GM13976 (cell line): ENCODE measurements at regions of chr10 and their contacts with region 1.

Region 1: DNA sequence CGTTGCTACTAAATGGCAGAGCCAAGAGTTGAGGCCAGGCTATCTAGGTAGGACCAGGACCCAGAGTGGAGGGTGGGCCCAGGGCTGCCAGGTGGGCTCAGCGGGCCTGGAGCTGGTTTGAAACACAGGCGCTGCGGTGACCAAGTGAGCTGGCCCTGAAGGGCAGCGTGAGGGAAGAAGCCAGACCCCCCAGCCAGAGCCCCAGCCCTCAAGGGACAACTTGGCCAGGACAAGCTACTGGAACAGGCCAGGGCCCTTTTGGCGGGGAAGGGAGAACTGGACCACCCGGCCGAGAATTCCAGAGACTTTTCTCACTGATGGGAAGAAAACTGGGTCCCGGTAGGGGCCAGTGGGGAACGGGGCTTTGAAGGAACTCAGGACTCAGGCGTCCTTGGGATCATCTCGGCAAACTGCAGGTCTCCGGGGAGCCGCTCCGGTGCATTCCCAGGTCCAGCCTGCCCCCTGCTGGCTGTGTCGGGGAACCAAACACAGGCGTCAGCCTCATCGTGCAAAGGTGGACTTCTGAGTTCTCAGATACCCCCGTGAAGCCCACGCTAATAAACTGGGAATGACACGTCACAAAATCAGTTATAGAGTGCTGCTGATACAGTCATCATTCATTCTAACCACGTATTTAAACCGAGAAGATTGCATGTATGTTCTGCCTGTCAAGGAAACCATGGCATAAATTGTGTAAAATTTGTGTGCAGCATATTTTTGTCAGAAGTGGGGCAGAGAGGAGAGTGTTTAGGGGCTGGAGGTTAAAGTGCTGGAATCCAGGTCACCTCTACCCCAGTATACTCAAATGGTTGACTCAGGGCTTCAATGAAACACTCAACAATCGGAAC is 76.0 kb upstream of the CPXM2 start:
- DNase-seq: peak; percentile 91
- CTCF ChIP-seq: peak; percentile 86

Region 2: DNA sequence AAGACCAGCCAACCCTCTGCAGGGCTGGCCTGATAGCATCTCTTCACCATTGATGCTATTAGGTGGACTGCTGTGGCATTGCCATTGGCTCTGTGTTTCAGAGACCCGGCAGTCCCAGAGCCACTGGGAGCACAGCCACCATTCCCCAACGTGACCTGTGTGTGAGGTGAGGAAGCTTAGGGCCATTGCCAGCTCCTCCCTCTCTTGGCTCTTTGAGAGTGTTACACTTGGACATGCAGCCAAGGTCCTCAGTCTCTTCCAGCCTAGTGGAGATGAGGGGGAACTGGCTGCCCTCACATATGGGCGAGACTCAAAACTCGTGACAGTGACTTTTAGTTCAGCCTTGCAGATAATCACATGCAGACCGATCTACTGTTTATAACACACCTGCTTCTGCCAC is 871.2 kb before region 1 on chr10:
- in situ Hi-C with region 1: loop called (anchors 25 kb)
- DNase-seq: no peak
- CTCF ChIP-seq: no peak

Region 3: DNA sequence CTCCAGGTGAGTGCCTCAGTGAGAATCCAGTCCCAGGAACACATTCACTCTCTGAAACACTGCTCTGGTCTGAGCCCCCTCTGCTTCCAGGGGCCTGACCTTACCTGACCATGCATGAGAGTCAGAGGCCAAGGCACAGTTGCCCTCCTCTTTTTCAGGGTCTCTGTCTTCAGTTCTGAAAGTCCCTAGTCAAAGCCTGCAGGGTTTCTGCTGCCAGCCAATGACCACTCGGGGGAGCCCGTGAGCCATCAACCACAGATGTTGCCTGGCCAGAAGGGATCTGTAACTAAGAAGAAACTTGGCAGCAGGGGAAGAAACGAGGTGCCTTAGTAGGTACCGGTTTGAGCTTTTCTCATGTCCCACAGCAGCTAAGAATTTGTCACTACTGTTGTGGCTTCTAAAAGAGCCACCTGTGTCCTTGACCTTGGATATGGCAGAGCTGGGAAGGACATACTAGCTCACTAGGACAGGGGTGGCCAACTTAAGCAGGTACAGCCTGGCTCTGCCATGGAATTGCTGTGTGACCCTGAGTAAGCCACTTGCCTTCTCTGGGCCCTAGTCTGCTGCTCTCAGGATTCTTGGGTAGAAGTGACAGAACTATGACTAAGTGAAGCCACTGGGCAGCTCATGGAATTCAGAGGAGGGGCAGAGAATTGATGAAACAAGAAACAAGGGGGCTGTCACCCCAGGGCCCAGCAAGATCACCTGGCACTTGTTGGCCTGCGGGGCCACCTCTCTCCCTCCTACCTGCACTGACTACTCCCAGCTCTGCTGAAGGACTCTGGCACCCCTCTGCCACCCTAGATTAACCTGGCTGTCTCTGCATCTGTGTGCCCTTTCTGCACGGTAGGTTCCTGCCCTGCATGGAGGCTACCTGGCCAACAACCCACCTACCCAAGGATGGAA is 385.3 kb before region 1 on chr10:
- in situ Hi-C with region 1: loop called (anchors 5 kb)
- DNase-seq: peak; percentile 82
- CTCF ChIP-seq: peak; percentile 68

Region 4: GRCh38 chr10:123906884-123907652 is 60.6 kb before region 1 on chr10:
- in situ Hi-C with region 1: no loop called
- DNase-seq: no peak
- CTCF ChIP-seq: no peak